H1 (cell line): ENCODE measurements at regions of chr11 and their contacts with region 1.

Region 1: DNA sequence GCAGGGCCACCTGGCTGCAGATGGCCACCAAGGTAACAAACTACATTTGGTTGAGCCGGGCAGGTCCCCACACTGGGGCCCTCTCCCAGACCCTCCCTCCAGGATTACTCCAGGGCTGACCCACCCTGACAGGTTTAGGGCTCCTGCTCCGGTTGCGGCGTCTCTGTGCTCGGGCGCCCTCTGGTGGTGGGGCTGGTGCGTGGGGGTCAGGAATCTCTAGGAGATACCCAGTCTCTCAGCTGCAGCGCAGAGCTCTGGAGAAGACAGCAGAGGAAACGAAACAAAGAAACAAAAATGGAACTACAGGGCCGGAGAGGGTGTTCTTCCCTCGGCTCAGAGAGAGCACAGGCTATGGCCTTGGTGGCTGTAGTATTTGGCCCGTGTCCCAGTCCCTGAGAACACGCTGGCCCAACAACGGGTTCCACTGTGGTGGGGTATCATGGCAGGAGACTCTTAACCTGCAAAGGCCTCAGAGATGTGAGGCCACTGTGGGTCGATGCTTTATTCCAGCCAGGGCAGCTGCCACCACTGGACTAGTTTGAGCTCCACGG is 2.4 kb downstream of the C11orf96 start:
- DNase-seq: peak in 1 of 2 experiments; percentile 98
- H3K4me3 ChIP-seq: peak overlapping the region; percentile 38 to 75 (median 52); a peak in 5 of 8 replicates
- H3K27ac ChIP-seq: no peak overlapping the region
- H3K4me1 ChIP-seq: peaks cover 0 to 17% (median 11%) of the 10 kb centered on the region in 4 experiments; a peak in 6 of 7 replicates
- H3K27me3 ChIP-seq: peaks cover 25 to 55% (median 45%) of the 10 kb centered on the region in 4 experiments
- CTCF ChIP-seq: peak; percentile 75 to 90 (median 78)
- EP300 ChIP-seq: 0 out of 3 replicates have a peak, but pooled peaks of 1 of the 2 experiments have one; percentile 21
- POLR2A ChIP-seq: no peak
- RAD21 ChIP-seq: peak; percentile 61 to 78

Region 2: DNA sequence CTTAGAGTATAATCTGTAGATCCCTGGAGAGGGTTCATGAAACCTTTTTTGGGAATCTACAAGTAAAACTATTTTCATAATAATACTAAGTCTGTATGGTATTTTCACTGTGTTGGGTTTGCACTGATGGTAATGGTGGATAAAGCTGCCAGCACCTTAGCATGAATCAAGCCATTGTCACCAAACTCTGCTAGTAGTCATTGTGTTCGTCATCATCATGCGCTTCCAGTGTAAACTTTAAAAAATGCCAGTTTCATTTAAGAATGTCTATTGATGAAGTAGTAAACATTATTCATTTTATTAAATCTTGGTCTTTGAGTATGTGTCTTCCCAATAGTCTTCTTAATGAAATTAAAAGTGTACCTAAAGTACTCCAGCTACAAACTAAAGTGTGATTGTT is 49.2 kb before region 1 on chr11:
- CTCF ChIA-PET with region 1: interaction called, 92 read pairs
- POLR2A ChIA-PET with region 1: interaction called, 3 read pairs
- DNase-seq: no peak
- H3K4me3 ChIP-seq: no peak overlapping the region
- H3K27ac ChIP-seq: no peak overlapping the region
- H3K4me1 ChIP-seq: no peaks in the 10 kb centered on the region
- H3K27me3 ChIP-seq: no peaks in the 10 kb centered on the region
- CTCF ChIP-seq: no peak
- EP300 ChIP-seq: no peak
- POLR2A ChIP-seq: no peak
- RAD21 ChIP-seq: no peak

Region 3: DNA sequence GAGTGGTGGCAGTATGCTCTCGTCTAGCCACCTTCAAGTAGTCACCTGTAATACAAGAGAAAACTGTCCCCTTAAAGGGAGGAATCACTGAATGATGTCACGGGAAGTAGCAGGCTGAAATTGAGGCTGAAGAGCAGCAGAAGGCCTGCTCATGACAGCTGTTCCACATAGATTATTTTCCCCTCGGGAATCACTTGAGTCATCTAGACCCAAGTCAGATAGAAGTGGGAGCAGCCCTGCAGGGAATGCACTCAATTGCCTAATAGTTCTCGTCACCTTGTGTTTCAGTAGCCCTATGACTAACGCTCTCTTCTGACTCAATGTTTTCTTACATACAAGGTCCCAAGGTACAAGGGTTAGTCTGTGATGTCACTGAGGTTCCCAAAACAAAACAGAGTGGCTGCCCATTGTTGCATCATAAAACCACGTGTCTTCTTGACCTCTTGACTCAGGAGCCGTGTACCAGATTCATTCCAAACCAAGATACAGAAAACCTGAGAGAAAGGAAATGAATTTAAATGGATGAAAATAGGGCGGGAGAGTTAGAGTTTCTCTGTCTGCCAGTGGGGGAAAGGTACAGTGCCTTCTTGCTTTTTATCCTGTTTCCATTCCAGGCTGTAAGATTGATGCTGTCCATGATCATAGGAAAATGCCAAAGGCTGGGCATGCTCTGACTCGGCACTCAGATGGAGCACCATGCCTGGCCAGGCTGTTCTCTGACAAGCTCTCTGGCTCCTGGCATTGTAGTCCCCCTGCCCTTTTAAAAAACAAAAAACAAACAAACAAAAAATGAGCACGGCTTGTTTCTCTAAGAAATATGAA is 24.0 kb before region 1 on chr11:
- CTCF ChIA-PET with region 1: interaction called, 98 read pairs
- POLR2A ChIA-PET with region 1: interaction called, 13 read pairs
- DNase-seq: no peak
- H3K4me3 ChIP-seq: no peak overlapping the region
- H3K27ac ChIP-seq: no peak overlapping the region
- H3K4me1 ChIP-seq: peaks cover 2 to 22% (median 11%) of the 10 kb centered on the region in 4 experiments; a peak in 6 of 7 replicates
- H3K27me3 ChIP-seq: no peaks in the 10 kb centered on the region
- CTCF ChIP-seq: no peak
- EP300 ChIP-seq: no peak
- POLR2A ChIP-seq: no peak
- RAD21 ChIP-seq: no peak

Region 4: GRCh38 chr11:43955381-43956118 is 10.7 kb after region 1 on chr11:
- CTCF ChIA-PET with region 1: interaction called, 140 read pairs
- POLR2A ChIA-PET with region 1: interaction called, 13 read pairs
- DNase-seq: no peak
- H3K4me3 ChIP-seq: no peak overlapping the region
- H3K27ac ChIP-seq: no peak overlapping the region
- H3K4me1 ChIP-seq: peaks cover 6 to 27% (median 14%) of the 10 kb centered on the region in 4 experiments
- H3K27me3 ChIP-seq: no peaks in the 10 kb centered on the region
- CTCF ChIP-seq: no peak
- EP300 ChIP-seq: no peak
- POLR2A ChIP-seq: no peak
- RAD21 ChIP-seq: no peak

Region 5: DNA sequence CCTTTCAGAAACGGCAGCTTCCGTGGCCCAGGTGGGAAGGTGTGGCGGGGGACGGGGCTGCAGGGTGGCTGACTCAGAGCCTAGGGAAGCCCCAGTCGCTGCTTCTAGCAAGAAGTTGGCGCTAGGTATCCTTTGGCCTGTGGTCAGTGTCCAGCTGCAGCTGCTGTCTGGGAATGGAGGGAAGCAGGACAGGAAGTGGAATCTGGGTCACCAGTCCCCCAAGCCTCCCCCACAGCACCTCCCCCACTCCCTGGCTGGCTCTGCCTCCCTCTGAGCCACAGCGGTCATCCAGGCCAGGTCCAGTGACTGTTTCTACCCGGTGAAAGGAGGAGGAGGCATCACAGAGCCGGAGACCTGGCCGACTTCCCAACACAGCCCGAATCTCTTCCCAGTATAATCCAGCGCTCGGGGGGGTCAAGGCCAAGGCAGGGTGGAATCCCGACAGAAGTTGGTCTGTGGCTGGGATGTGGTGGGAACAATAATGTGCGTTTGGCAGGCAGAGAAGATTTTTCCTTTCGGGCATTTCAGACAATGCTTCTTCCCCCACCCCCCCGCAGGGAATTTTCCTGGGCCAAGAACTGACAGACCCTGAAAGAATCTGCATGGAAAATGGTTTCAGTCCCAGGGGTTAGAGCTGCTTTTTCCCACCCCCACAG is 42.7 kb after region 1 on chr11:
- CTCF ChIA-PET with region 1: interaction called, 63 read pairs
- POLR2A ChIA-PET with region 1: interaction called, 8 read pairs
- DNase-seq: no peak
- H3K4me3 ChIP-seq: no peak overlapping the region
- H3K27ac ChIP-seq: no peak overlapping the region
- H3K4me1 ChIP-seq: peaks cover 0 to 17% (median 8%) of the 10 kb centered on the region in 4 experiments; a peak in 6 of 7 replicates
- H3K27me3 ChIP-seq: no peaks in the 10 kb centered on the region; a peak in 1 of 7 replicates
- CTCF ChIP-seq: no peak
- EP300 ChIP-seq: no peak
- POLR2A ChIP-seq: no peak
- RAD21 ChIP-seq: no peak

Region 6: DNA sequence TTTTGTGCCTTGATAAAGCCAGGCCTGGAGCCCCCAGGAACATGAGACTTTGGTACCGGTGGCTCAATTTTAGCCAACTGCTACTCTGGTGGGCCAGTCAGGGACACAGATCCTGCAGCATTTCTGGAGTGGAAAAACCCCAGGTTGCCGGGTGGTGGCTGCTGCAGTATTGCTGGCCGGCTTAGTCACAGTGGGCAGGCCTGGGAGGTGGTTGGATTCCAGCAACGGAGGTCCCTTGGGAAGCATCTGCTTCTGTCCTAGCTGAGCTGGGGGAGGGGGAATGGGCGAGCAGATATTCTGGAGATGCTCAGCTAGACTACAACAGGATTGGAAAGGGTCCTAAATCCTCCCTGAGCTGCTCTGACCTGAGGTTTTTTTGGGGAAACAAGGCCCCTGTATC is 71.3 kb after region 1 on chr11:
- CTCF ChIA-PET with region 1: interaction called, 32 read pairs
- POLR2A ChIA-PET with region 1: interaction called, 3 read pairs
- DNase-seq: peak in 1 of 2 experiments; percentile 23
- H3K4me3 ChIP-seq: no peak overlapping the region
- H3K27ac ChIP-seq: no peak overlapping the region
- H3K4me1 ChIP-seq: no peaks in the 10 kb centered on the region; a peak in 1 of 7 replicates
- H3K27me3 ChIP-seq: no peaks in the 10 kb centered on the region
- CTCF ChIP-seq: no peak
- EP300 ChIP-seq: no peak
- POLR2A ChIP-seq: no peak
- RAD21 ChIP-seq: no peak

Region 7: DNA sequence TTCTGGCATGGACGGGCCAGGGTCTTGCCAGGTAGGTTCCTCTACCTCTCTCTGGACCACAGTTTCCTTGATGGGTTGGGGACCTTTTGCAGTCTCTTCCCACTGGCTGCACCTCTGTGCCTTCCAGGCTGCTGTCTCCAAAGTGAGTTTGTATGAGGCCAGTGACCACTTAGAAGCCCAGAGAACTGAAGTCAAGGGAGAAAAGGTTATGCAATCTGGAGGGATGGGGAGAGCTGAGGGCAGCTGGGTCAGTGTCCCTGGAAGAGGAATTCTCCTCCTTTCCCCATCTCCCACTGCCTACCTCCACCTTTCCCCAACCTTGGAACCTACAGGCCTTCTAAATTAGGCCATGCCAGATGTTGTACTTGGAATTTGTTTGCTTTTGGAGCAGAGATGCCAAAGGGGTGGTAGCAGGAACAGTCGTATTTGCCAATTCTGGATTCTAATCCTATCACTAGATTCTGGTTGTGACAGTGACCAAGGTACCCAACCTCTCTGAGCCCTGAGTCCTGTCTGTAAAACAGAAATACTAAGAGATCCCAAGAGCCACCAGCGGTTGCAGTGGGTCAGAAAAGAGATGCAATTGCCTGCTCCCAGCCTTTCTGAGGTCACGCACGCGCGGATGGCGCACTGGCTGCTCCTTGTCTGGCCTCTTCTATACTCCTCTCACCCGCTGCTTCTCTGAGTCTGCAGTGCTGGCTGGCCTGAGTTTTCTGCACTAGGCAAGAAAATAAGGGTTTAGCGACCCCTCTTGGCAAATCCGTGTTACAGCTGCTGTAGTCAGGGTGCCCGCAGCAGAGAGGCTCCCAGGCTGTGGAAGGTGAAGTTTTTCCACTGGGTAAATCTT is 92.2 kb after region 1 on chr11:
- CTCF ChIA-PET with region 1: interaction called, 60 read pairs
- POLR2A ChIA-PET with region 1: interaction called, 7 read pairs
- DNase-seq: peak; percentile 61 to 80
- H3K4me3 ChIP-seq: no peak overlapping the region
- H3K27ac ChIP-seq: no peak overlapping the region
- H3K4me1 ChIP-seq: peaks cover 0 to 2% (median 0%) of the 10 kb centered on the region in 4 experiments; a peak in 3 of 7 replicates
- H3K27me3 ChIP-seq: no peaks in the 10 kb centered on the region
- CTCF ChIP-seq: peak; percentile 75 to 96 (median 91)
- EP300 ChIP-seq: no peak
- POLR2A ChIP-seq: no peak
- RAD21 ChIP-seq: peak; percentile 97 to 98